ENCODE measurements at regions of chr9 and their contacts with region 1.

Region 1: DNA sequence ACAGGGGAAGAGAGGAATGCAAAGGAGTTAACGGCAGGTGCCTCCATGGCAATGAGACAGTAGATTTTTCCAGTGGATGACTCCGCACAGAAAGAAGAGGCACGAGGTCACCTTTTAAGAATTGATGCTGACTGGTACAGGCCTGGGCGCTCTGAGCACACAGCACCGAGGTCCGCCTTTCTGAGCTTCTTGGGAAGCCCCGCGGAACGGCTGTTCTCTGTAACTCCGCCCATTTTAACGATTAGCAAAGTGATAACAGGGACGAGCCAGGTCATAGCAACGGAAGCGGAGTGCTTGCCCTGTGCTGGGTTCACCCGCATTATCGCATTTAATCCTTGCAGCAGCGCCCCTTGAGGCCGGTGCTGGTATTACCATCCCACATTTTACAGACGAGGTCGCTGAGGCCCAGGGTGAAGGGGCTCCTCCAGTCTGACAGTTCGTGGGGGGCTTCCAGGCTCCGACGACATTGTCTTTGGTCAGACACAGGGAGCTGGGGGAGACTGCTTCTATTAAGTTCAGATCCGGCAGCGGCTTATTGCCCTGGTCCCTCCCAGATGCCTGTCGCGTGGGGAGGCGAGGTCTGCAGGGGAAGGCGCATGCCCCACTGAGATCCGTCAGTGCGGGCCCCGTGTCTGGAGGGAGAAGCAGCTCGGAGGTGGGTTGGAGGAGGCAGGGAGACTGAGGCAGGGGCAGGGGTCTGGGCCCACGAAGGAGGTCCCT is 22.4 kb upstream of the HMCN2 start:
- DNase-seq: peak; percentile 88
- H3K4me3 Mint-ChIP-seq: peak overlapping the region; percentile 20
- H3K27ac Mint-ChIP-seq: no peak overlapping the region
- H3K4me1 Mint-ChIP-seq: peaks cover 30% of the 10 kb centered on the region
- H3K27me3 Mint-ChIP-seq: no peaks in the 10 kb centered on the region

Region 2: DNA sequence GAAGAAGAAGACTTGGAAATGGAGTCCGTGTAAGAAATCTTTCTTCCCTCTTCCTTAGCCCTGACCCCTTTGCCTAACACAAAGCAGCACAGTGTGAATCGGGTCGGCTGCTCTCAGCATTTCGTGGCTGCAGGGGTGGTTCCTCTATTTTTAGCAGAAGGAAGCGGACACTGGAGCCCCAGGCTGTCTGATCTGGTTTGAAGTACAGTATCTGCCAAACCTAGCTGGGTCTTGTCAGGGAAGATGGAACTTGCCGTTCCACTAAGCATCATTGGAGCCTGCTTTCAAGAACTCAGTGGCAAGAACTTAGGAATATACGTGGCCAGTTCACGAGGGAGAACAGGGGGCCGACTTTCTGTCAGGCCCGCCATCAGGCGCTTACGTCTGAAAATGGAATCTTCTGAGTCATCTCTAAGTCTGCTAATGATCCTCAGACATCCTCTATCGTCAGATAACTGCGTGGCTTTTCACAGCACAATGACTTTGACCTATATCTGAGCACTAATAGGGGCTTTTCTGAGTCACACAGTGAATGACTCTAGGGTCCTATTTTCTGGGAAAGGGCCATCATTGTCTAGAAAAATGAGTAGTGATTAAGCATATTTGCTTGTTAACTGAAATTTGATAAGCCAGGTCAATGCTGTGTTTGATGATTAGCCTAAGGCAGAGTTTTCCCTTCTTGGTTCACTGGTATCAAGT is 114.3 kb before region 1 on chr9:
- CTCF ChIA-PET with region 1: interaction called, 4 read pairs
- intact Hi-C with region 1: loop called (anchors 1 kb)
- DNase-seq: peak; percentile 76
- H3K4me3 Mint-ChIP-seq: peak overlapping the region; percentile 71
- H3K27ac Mint-ChIP-seq: peak overlapping the region; percentile 99
- H3K4me1 Mint-ChIP-seq: peaks cover 52% of the 10 kb centered on the region
- H3K27me3 Mint-ChIP-seq: no peaks in the 10 kb centered on the region

Region 3: GRCh38 chr9:130254752-130255630 is 11.8 kb after region 1 on chr9:
- CTCF ChIA-PET with region 1: interaction called, 11 read pairs
- intact Hi-C with region 1: no loop called
- DNase-seq: no peak
- H3K4me3 Mint-ChIP-seq: no peak overlapping the region
- H3K27ac Mint-ChIP-seq: no peak overlapping the region
- H3K4me1 Mint-ChIP-seq: no peaks in the 10 kb centered on the region
- H3K27me3 Mint-ChIP-seq: peaks cover 5% of the 10 kb centered on the region

Region 4: GRCh38 chr9:130268521-130269211 is 25.5 kb after region 1 on chr9:
- CTCF ChIA-PET with region 1: no interaction called
- intact Hi-C with region 1: no loop called
- DNase-seq: no peak
- H3K4me3 Mint-ChIP-seq: no peak overlapping the region
- H3K27ac Mint-ChIP-seq: no peak overlapping the region
- H3K4me1 Mint-ChIP-seq: peaks cover 8% of the 10 kb centered on the region
- H3K27me3 Mint-ChIP-seq: peaks cover 42% of the 10 kb centered on the region

Region 5: DNA sequence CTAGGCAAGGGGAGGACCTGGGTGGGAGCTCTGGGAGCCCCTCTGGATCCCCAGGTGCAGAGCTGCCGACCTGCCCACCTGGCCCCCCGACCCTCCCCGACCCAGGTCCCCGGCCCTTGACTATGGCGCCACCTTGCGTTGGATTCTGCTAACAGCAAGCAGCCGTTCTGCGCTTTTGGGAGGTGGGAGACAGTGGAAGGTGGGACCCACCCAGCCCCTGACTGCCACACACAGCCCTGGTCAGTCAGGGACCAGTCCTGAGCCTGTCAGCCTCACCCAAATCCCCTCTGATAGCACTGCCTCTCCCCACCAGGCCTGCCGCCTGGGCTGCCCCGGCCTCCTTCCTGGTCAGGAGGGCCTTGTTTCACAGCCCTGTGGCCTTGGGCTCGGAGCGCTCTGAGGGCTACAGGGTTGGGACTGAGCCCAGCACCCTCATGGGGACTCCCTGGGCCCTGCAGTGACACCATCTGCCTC is 100.3 kb after region 1 on chr9:
- CTCF ChIA-PET with region 1: no interaction called
- intact Hi-C with region 1: loop called (anchors 2 kb)
- DNase-seq: peak; percentile 58
- H3K4me3 Mint-ChIP-seq: no peak overlapping the region
- H3K27ac Mint-ChIP-seq: no peak overlapping the region
- H3K4me1 Mint-ChIP-seq: no peaks in the 10 kb centered on the region
- H3K27me3 Mint-ChIP-seq: no peaks in the 10 kb centered on the region

Measured in activated naive CD4-positive, alpha-beta T cell treated with anti-CD3 and anti-CD28 coated beads for 36 hours (primary cell).